K562 (cell line): ENCODE measurements at regions of chr17 and their contacts with region 1.

Region 1: GRCh38 chr17:17280613-17281549 is at the start of gene COPS3:
- DNase-seq: peak; percentile 92 to 97 (median 94)
- ATAC-seq: peak; percentile 96
- H3K4me3 ChIP-seq: peak within 1 kb of the TSS; percentile 95
- H3K27ac ChIP-seq: peak within 1 kb of the TSS; percentile 98
- H3K4me1 ChIP-seq: peaks cover 20 to 22% of the 10 kb centered on the region in 2 experiments; a peak in 4 of 5 replicates
- H3K27me3 ChIP-seq: no peaks in the 10 kb centered on the region
- CTCF ChIP-seq: no peak
- EP300 ChIP-seq: 0 out of 2 replicates have a peak, but pooled peaks have one; percentile 16
- POLR2A ChIP-seq: peak; percentile 92
- RAD21 ChIP-seq: no peak
- polyA plus RNA-seq, gene COPS3: 284 to 295 TPM

Region 2: GRCh38 chr17:17108451-17109049 is 172.3 kb before region 1 on chr17:
- CTCF ChIA-PET with region 1: no interaction called
- POLR2A ChIA-PET with region 1: no interaction called
- in situ Hi-C with region 1: no loop called
- intact Hi-C with region 1: no loop called
- DNase-seq: no peak
- ATAC-seq: no peak
- H3K4me3 ChIP-seq: no peak overlapping the region
- H3K27ac ChIP-seq: no peak overlapping the region
- H3K4me1 ChIP-seq: peaks cover 0 to 15% of the 10 kb centered on the region in 2 experiments; a peak in 3 of 5 replicates
- H3K27me3 ChIP-seq: no peaks in the 10 kb centered on the region
- CTCF ChIP-seq: no peak
- EP300 ChIP-seq: no peak
- POLR2A ChIP-seq: no peak
- RAD21 ChIP-seq: no peak

Region 3: GRCh38 chr17:17186051-17186450 is 94.8 kb before region 1 on chr17:
- CTCF ChIA-PET with region 1: no interaction called
- POLR2A ChIA-PET with region 1: no interaction called
- in situ Hi-C with region 1: no loop called
- intact Hi-C with region 1: no loop called
- DNase-seq: no peak
- ATAC-seq: no peak
- H3K4me3 ChIP-seq: no peak overlapping the region
- H3K27ac ChIP-seq: no peak overlapping the region
- H3K4me1 ChIP-seq: no peaks in the 10 kb centered on the region; a peak in 1 of 5 replicates
- H3K27me3 ChIP-seq: no peaks in the 10 kb centered on the region
- CTCF ChIP-seq: no peak
- EP300 ChIP-seq: no peak
- POLR2A ChIP-seq: no peak
- RAD21 ChIP-seq: no peak

Region 4: DNA sequence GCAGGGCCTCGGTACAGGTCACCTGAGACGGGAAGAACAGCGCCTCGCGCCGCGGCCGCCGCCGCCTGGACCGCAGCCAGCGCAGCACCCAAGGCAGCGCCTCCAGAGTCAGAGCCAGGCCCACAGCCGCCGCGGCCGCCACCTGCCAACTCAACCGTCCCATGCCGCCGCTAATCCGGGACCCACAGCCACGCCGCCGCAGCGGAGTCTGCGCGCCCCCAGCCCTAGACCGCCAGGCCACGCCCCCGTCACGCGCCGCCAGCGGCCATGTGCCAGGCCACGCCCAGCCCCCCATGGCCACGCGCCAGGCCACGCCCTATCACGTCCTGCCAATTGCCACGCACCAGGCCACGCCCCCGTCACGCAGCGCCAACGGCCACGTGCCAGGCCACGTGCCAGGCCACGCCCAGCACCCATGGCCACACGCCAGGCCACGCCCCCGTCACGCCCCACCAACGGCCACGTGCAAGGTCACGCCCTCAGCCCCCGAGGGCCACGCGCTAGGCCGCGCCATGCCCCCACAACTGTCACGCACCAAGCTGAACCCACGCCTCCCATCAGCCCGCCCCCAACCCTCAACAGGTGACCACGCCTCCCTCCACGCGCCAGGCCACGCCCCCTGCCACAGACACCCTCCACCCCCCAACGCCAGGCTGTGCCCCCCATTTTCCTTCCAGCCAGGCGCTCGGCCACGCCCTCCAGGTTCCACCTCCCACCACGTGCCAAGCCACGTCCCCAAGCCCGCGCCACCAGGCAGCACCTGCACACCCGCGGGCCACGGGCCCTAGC is 74.6 kb before region 1 on chr17 and contains the start of gene PLD6:
- CTCF ChIA-PET with region 1: no interaction called
- POLR2A ChIA-PET with region 1: no interaction called
- in situ Hi-C with region 1: no loop called
- intact Hi-C with region 1: loop called (anchors 2 kb)
- DNase-seq: peak; percentile 86 to 88 (median 88)
- ATAC-seq: peak; percentile 77
- H3K4me3 ChIP-seq: peak within 1 kb of the TSS; percentile 66
- H3K27ac ChIP-seq: peak within 1 kb of the TSS; percentile 92
- H3K4me1 ChIP-seq: peaks cover 10 to 39% of the 10 kb centered on the region in 2 experiments; a peak in 4 of 5 replicates
- H3K27me3 ChIP-seq: no peaks in the 10 kb centered on the region
- CTCF ChIP-seq: no peak
- EP300 ChIP-seq: no peak
- POLR2A ChIP-seq: peak; percentile 63; the same call in 1 of the 2 replicates
- RAD21 ChIP-seq: no peak
- polyA plus RNA-seq, gene PLD6: 3.6 to 15.6 TPM

Region 5: GRCh38 chr17:17269926-17270773 is 10.7 kb before region 1 on chr17:
- CTCF ChIA-PET with region 1: no interaction called
- POLR2A ChIA-PET with region 1: interaction called, 10 read pairs
- in situ Hi-C with region 1: no loop called
- intact Hi-C with region 1: no loop called
- DNase-seq: no peak
- ATAC-seq: no peak; the same call in 2 of the 3 replicates
- H3K4me3 ChIP-seq: no peak overlapping the region
- H3K27ac ChIP-seq: no peak overlapping the region
- H3K4me1 ChIP-seq: no peaks in the 10 kb centered on the region
- H3K27me3 ChIP-seq: no peaks in the 10 kb centered on the region
- CTCF ChIP-seq: peak; percentile 25 to 37 (median 36); a peak in 4 of 6 replicates
- EP300 ChIP-seq: no peak
- POLR2A ChIP-seq: no peak
- RAD21 ChIP-seq: no peak